CD4-positive, alpha-beta memory T cell (primary cell): ENCODE measurements at regions of chr14 and their contacts with region 1.

Region 1: DNA sequence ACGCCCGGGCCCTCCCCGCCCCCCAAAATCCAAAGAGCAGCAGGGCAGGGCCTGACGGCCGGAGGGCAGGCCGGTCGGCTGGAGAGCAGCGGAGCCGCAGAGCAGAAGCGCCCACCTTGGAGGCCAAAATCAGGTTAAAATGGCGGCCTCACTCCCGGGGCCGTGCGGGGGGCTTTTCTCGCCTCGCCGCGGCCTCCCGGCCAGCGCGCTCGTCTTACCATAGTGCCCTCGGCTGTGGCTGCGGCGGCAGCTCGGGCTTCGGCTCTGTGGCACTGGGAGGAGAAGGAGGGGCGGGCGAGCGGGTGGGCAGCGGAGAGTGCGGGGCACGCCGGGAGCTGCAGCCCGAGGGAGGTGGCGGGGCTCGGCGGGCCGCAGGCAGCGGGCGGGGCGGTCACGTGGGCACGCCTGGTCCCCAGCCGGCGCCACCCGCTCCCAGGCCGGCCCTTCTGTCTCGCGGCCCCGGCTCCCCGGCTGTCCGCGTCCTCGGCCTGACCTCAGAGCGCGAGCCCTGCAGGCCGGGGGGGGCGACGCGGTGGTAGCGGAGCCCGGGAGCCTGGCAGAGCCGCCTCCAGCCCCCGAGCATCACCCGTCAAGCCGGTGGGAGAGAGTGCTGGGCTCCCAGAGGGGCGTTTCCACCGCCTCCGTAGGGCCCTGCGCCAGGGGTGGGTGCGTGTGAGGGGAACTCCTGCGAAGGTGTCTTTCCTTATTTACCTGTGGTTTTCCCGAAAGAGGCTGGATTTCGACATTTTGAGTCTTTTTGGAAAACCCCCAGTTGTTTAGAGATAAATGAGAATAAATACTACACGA is at the start of gene CFL2:
- DNase-seq: peak; percentile 66 to 90 (median 74)
- H3K4me3 ChIP-seq: peak within 1 kb of the TSS; percentile 25 to 65
- H3K4me3 Mint-ChIP-seq: peak within 1 kb of the TSS; percentile 88 to 95 (median 93)
- H3K27ac ChIP-seq: peak within 1 kb of the TSS; percentile 83
- H3K27ac Mint-ChIP-seq: peak within 1 kb of the TSS; percentile 92 to 96 (median 94)
- H3K4me1 ChIP-seq: peaks cover 28% of the 10 kb centered on the region
- H3K4me1 Mint-ChIP-seq: peaks cover 15 to 27% (median 19%) of the 10 kb centered on the region in 4 donors
- H3K27me3 ChIP-seq: no peaks in the 10 kb centered on the region
- H3K27me3 Mint-ChIP-seq: no peaks in the 10 kb centered on the region
- total RNA-seq, gene CFL2: 12.3 to 12.6 TPM

Region 2: DNA sequence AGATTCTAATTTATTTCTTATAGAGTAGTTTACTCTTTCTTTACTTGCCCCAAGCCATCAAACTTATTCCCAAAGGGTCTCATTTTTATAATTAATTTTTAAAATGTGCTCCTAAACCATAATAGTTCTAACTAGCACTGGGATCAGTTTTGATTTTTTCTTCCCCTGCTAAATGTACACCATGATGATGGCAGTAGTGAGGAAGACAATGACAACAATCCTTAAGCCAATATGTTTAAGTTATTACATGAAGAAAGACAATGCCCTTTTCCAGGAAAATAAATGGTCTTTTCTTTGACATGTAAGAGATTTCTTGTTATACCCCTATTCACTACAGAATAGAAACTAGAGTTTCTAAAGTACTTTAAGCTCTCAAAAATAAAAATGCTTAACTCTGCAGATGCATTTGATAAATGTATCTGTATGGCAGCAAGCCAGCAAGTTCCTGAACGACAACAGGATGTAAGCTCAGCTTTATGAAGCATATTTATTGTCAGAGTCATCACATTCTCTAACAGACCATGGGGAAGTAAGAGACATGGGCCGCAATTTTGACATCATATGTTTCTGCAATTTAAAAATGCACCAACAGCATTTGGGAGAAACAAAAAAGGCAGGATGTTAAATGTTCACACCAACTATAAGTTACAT is 48.6 kb before region 1 on chr14:
- CTCF ChIA-PET with region 1: interaction called, 27 read pairs
- POLR2A ChIA-PET with region 1: interaction called, 4 read pairs
- intact Hi-C with region 1: loop called (anchors 5 kb)
- DNase-seq: peak in 4 of 5 donors; percentile 35 to 61 (median 51)
- H3K4me3 ChIP-seq: peak overlapping the region in 1 of 2 donors; percentile 12
- H3K4me3 Mint-ChIP-seq: peak overlapping the region in 7 of 8 donors; percentile 3 to 89 (median 73)
- H3K27ac ChIP-seq: peak overlapping the region; percentile 7
- H3K27ac Mint-ChIP-seq: peak overlapping the region; percentile 59 to 95 (median 92)
- H3K4me1 ChIP-seq: peaks cover 21% of the 10 kb centered on the region
- H3K4me1 Mint-ChIP-seq: peaks cover 8 to 17% (median 12%) of the 10 kb centered on the region in 4 donors
- H3K27me3 ChIP-seq: no peaks in the 10 kb centered on the region
- H3K27me3 Mint-ChIP-seq: no peaks in the 10 kb centered on the region

Region 3: DNA sequence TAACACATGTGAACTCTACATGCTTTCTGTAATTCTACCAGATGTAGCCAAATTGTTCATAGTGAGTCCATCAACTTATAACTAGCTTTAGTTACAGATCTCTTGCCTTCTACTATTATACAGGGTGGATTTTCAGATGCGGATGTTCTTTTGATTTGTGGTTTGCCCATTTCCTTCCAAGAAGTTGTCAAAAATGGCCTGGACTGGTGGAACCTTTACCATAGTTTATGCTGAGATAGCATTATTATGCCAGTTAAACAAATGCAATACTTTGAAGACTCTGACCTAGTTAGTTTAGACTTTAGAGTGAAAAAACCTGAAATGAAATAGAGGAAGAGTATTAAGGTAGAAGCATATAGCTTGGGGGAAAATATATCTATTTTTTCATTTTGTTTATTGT is 27.3 kb after region 1 on chr14:
- CTCF ChIA-PET with region 1: no interaction called
- POLR2A ChIA-PET with region 1: interaction called, 14 read pairs
- intact Hi-C with region 1: no loop called
- DNase-seq: peak in 4 of 5 donors; percentile 44 to 68 (median 52)
- H3K4me3 ChIP-seq: no peak overlapping the region
- H3K4me3 Mint-ChIP-seq: peak overlapping the region in 7 of 8 donors; percentile 23 to 72 (median 55)
- H3K27ac ChIP-seq: no peak overlapping the region
- H3K27ac Mint-ChIP-seq: peak overlapping the region; percentile 40 to 97 (median 89)
- H3K4me1 ChIP-seq: peaks cover 25% of the 10 kb centered on the region
- H3K4me1 Mint-ChIP-seq: peaks cover 34 to 53% (median 45%) of the 10 kb centered on the region in 4 donors
- H3K27me3 ChIP-seq: no peaks in the 10 kb centered on the region
- H3K27me3 Mint-ChIP-seq: peaks cover 0 to 1% of the 10 kb centered on the region in 2 donors

Region 4: GRCh38 chr14:35215110-35215876 is 500.8 kb after region 1 on chr14:
- CTCF ChIA-PET with region 1: no interaction called
- POLR2A ChIA-PET with region 1: no interaction called
- intact Hi-C with region 1: no loop called
- DNase-seq: peak in 1 of 5 donors; percentile 24
- H3K4me3 ChIP-seq: no peak overlapping the region
- H3K4me3 Mint-ChIP-seq: no peak overlapping the region
- H3K27ac ChIP-seq: no peak overlapping the region
- H3K27ac Mint-ChIP-seq: peak overlapping the region in 4 of 7 donors; percentile 15 to 81 (median 68)
- H3K4me1 ChIP-seq: peaks cover 7% of the 10 kb centered on the region
- H3K4me1 Mint-ChIP-seq: peaks cover 10 to 29% (median 15%) of the 10 kb centered on the region in 4 donors
- H3K27me3 ChIP-seq: no peaks in the 10 kb centered on the region
- H3K27me3 Mint-ChIP-seq: no peaks in the 10 kb centered on the region